PC-3 (cell line): ENCODE measurements at regions of chr10 and their contacts with region 1.

Region 1: GRCh38 chr10:89793649-89794254 is 92.4 kb downstream of the KIF20B start:
- DNase-seq: peak; percentile 79
- ATAC-seq: peak; percentile 76
- H3K4me3 ChIP-seq: no peak overlapping the region
- H3K27ac ChIP-seq: no peak overlapping the region
- H3K4me1 ChIP-seq: peaks cover 5% of the 10 kb centered on the region
- H3K27me3 ChIP-seq: no peaks in the 10 kb centered on the region
- CTCF ChIP-seq: peak; percentile 84

Region 2: DNA sequence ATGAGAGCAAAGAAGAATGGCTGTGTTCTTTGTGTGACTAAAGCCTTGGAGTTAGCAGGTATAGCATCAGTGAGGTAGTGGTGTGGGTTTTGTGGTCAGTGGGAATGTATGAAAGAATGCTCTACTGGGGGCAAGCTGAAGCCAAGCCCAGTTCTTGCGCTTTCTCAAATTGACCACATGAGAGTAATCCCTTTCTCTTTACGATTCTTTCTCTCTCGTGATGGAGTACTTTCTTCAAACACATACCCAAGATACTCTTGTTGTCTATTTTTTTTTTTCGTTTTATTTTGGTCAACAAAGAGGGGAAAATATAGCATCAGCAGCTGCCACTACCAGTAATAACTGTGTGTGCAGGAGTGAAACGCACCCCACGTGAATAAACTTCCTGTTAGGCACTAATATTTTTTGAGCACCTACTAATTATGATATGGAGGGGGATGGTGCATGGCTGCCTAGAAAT is 140.3 kb before region 1 on chr10:
- CTCF ChIA-PET with region 1: no interaction called
- POLR2A ChIA-PET with region 1: no interaction called
- intact Hi-C with region 1: no loop called
- DNase-seq: peak; percentile 51
- ATAC-seq: peak; percentile 40; the same call in 1 of the 2 replicates
- H3K4me3 ChIP-seq: no peak overlapping the region
- H3K27ac ChIP-seq: no peak overlapping the region
- H3K4me1 ChIP-seq: peaks cover 3% of the 10 kb centered on the region; the same call in 1 of the 2 replicates
- H3K27me3 ChIP-seq: no peaks in the 10 kb centered on the region
- CTCF ChIP-seq: no peak

Region 3: GRCh38 chr10:90148116-90148855 is 354.5 kb after region 1 on chr10:
- CTCF ChIA-PET with region 1: no interaction called
- POLR2A ChIA-PET with region 1: no interaction called
- intact Hi-C with region 1: loop called (anchors 10 kb)
- DNase-seq: peak; percentile 69
- ATAC-seq: peak; percentile 57
- H3K4me3 ChIP-seq: peak overlapping the region; percentile 17; the same call in 1 of the 2 replicates
- H3K27ac ChIP-seq: peak overlapping the region; percentile 57
- H3K4me1 ChIP-seq: peaks cover 30% of the 10 kb centered on the region
- H3K27me3 ChIP-seq: no peaks in the 10 kb centered on the region
- CTCF ChIP-seq: peak; percentile 70

Region 4: GRCh38 chr10:90288391-90288933 is 494.7 kb after region 1 on chr10:
- CTCF ChIA-PET with region 1: no interaction called
- POLR2A ChIA-PET with region 1: no interaction called
- intact Hi-C with region 1: loop called (anchors 5 kb)
- DNase-seq: peak; percentile 53
- ATAC-seq: peak; percentile 66
- H3K4me3 ChIP-seq: no peak overlapping the region
- H3K27ac ChIP-seq: peak overlapping the region; percentile 42
- H3K4me1 ChIP-seq: peaks cover 19% of the 10 kb centered on the region
- H3K27me3 ChIP-seq: no peaks in the 10 kb centered on the region
- CTCF ChIP-seq: peak; percentile 63

Region 5: DNA sequence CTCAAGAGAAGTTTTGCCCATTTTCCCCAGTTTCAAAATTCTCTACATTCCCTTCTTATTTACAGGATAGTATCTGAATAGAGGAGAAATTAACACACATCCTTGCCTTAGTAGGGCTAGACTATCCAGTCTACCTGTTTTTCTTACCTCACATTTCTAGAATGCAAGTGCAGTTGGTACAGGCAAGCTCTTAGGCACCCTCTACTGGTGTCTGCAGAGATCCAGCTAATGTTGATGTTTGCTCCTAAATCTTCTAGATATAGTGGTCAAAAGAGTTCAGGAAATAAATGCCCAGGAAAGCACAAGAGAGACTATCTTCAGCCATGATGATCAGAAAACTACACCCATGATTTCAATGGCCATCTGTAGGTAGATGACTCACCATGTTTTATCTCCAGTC is 858.8 kb after region 1 on chr10:
- CTCF ChIA-PET with region 1: no interaction called
- POLR2A ChIA-PET with region 1: no interaction called
- intact Hi-C with region 1: loop called (anchors 5 kb)
- DNase-seq: peak; percentile 57
- ATAC-seq: peak; percentile 53
- H3K4me3 ChIP-seq: no peak overlapping the region
- H3K27ac ChIP-seq: no peak overlapping the region
- H3K4me1 ChIP-seq: no peaks in the 10 kb centered on the region
- H3K27me3 ChIP-seq: no peaks in the 10 kb centered on the region
- CTCF ChIP-seq: peak; percentile 71

Region 6: GRCh38 chr10:90787393-90788198 is 993.8 kb after region 1 on chr10:
- CTCF ChIA-PET with region 1: no interaction called
- POLR2A ChIA-PET with region 1: no interaction called
- intact Hi-C with region 1: loop called (anchors 5 kb)
- DNase-seq: peak; percentile 55
- ATAC-seq: peak; percentile 64; the same call in 1 of the 2 replicates
- H3K4me3 ChIP-seq: no peak overlapping the region
- H3K27ac ChIP-seq: no peak overlapping the region
- H3K4me1 ChIP-seq: no peaks in the 10 kb centered on the region
- H3K27me3 ChIP-seq: peaks cover 22% of the 10 kb centered on the region
- CTCF ChIP-seq: peak; percentile 85

Region 7: DNA sequence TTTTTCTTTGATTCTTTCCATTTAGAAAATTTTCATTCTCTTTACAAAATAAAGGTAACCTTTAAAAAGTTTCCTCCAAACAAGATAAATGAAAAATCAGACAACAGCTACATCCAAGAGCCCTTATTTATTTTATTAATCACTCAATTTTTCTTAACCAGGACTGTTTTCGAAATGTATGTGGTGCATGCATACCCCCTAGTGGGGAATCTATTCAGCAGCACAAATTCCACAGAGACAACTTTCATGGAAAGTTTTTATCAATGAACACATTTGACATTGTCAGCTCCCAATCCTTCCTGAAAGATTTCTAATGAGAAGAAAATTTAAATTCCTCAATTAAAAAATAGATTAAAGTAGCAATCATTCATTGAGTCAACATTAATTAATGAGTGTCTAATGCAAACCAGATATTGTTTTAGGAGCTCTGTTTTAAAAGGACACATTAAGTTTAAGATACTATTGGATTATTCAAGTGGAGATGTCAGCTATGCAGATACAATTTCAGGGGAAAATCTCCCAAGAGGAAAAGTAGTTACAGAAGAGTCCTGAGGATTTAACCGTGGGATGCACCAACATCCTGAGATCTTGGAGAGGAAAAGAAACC is 1069.3 kb after region 1 on chr10:
- CTCF ChIA-PET with region 1: no interaction called
- POLR2A ChIA-PET with region 1: no interaction called
- intact Hi-C with region 1: loop called (anchors 2 kb)
- DNase-seq: peak; percentile 66
- ATAC-seq: no peak
- H3K4me3 ChIP-seq: no peak overlapping the region
- H3K27ac ChIP-seq: no peak overlapping the region
- H3K4me1 ChIP-seq: peaks cover 20% of the 10 kb centered on the region
- H3K27me3 ChIP-seq: no peaks in the 10 kb centered on the region
- CTCF ChIP-seq: peak; percentile 85